Ascending aorta (tissue), 2 donors: ENCODE measurements at regions of chr1 and their contacts with region 1.

Region 1: DNA sequence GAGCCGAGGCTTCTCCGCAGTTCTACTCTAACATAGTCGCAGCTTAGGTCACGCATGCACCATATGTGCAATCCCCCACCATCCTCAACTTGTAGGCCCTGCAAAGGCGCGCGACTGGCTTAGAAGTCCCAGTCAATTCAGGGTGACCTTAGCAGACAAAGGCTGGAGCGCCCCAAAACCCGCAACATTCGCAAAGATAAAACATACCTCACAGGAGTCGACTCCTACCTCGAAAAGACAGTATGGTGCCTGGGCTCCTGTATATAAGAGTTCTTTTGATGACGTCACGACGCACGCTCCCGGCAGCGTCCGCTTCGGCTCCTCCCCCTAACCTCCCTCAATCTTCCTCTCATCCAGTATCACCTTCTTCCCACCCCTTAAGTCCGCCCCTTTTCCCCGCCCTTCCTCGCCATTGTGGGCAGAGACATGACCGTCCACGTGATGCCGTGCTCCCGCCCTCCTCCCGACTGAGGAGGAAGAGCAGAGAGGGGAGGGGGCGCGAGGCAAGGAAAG is at the start of gene GAS5:
- DNase-seq: peak; percentile 99 to 100
- H3K4me3 ChIP-seq: peak within 1 kb of the TSS; percentile 85 to 97
- H3K27ac ChIP-seq: peak within 1 kb of the TSS; percentile 93 to 99
- H3K4me1 ChIP-seq: peaks cover 4 to 10% of the 10 kb centered on the region in 2 donors
- H3K27me3 ChIP-seq: no peaks in the 10 kb centered on the region
- CTCF ChIP-seq: no peak
- total RNA-seq, gene GAS5: 149 TPM

Region 2: DNA sequence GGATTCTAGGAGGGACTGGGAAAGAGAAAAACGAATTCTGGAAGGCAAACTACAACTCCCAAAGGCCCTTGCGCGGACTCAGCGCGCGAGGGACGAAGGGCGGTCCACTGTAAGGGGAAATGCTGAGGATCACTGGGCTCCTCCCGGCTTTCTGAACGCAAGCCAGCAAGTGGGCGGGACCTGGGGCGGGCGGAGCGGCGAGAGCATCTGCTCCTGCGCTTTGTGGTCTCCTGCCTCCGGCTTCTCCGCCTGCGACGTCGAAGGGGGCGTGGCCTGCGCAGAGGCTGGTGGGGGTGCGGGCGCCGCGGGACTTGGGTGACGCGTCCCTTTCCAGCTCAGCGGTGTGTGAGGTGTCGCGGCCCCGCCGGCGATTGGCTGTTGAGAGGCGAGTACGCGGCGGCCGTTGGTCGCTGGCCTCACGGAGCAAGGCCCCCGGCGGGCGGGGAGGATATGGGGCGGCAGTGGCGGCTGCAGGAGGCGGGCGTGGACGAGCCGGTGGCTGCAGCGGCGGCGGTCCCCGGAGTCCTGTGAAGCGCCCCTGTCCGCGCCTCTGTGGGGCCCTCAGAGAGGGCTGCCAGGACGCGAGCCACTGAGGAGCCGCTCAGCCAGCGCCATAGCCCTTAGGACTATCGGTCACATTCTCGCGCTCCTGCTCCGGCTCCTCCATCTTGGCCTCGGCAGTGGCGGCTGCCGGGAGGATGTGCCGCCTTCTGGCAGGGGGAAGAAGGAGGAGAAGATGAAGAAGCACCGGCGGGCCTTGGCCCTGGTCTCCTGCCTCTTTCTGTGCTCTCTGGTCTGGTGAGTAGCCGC is 1334.9 kb before region 1 on chr1 and contains the start of gene SUCO:
- intact Hi-C with region 1: loop called (anchors 5 kb)
- DNase-seq: peak; percentile 100
- H3K4me3 ChIP-seq: peak within 1 kb of the TSS; percentile 80 to 83
- H3K27ac ChIP-seq: peak within 1 kb of the TSS; percentile 95 to 98
- H3K4me1 ChIP-seq: peaks cover 4 to 10% of the 10 kb centered on the region in 2 donors
- H3K27me3 ChIP-seq: no peaks in the 10 kb centered on the region
- CTCF ChIP-seq: peak in 1 of 3 experiments; percentile 5
- total RNA-seq, gene SUCO: 7.8 TPM

Region 3: DNA sequence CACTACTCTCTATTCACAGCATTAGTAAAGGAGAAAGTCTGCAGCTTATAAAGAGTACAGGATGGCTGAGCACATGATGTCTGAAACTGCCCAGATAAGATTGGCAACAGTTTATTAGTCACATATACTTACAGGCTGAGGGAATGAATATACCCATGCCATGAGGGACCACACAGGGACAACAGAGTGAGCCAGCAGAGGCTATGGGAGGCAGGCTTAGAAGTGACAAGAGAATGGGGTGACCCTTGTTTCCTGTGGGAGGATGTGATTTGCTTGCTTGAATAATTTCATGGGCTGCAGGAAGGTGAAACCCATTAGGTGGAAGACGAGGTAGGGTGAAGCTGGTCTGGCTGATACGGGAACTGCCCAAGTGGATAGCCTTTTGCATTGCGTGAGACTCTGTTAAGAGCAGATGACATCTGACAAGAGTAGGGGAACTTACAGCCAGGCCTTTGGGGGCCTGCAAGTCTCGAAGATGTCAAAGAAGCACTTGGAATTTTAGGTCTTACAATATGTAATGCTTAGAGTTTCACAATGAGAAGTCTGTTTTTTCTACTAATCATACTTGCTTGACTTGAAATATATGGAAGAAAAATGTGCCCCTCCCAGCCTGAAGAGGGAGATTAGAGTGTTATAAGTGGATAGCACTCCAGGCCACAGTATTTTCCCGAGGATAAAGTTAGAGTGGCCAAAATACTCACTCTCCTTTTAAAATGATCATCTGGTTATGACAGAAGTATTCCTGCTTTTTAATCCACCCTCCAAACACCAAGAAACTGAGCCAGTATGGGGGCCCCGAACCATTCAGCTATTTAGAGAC is 626.1 kb before region 1 on chr1:
- intact Hi-C with region 1: no loop called
- DNase-seq: no peak
- H3K4me3 ChIP-seq: no peak overlapping the region
- H3K27ac ChIP-seq: no peak overlapping the region
- H3K4me1 ChIP-seq: no peaks in the 10 kb centered on the region
- H3K27me3 ChIP-seq: no peaks in the 10 kb centered on the region
- CTCF ChIP-seq: no peak

Region 4: GRCh38 chr1:173476664-173477285 is 391.0 kb before region 1 on chr1:
- intact Hi-C with region 1: loop called (anchors 1 kb)
- DNase-seq: peak; percentile 64 to 93
- H3K4me3 ChIP-seq: peak overlapping the region; percentile 88 to 95
- H3K27ac ChIP-seq: peak overlapping the region; percentile 99
- H3K4me1 ChIP-seq: peaks cover 12 to 37% of the 10 kb centered on the region in 2 donors
- H3K27me3 ChIP-seq: no peaks in the 10 kb centered on the region
- CTCF ChIP-seq: peak in 1 of 3 experiments; percentile 5

Region 5: DNA sequence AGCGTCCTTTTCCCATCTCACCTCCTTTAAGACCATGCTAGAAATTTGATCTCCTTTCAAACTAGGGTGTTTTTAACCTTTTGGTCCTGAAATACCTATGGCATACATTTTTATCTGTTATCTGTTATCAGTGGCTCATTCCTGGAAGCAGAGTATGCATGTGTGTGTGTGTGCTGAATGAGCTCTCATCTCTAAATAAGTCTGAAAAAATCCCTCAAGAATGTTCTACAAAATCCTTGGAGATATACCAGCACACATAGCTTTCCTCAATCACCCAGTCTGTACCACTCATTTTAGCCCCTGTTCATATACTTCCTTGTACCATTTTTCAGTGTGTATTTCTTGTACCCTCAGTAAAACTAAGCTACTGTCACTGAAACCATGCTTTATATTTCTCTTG is 49.4 kb before region 1 on chr1:
- intact Hi-C with region 1: no loop called
- DNase-seq: no peak
- H3K4me3 ChIP-seq: no peak overlapping the region
- H3K27ac ChIP-seq: no peak overlapping the region
- H3K4me1 ChIP-seq: peaks cover 0 to 1% of the 10 kb centered on the region in 2 donors
- H3K27me3 ChIP-seq: no peaks in the 10 kb centered on the region
- CTCF ChIP-seq: no peak

Region 6: GRCh38 chr1:174022080-174022975 is 154.5 kb after region 1 on chr1 and contains the start of gene RC3H1:
- intact Hi-C with region 1: loop called (anchors 2 kb)
- DNase-seq: peak; percentile 63 to 92
- H3K4me3 ChIP-seq: peak within 1 kb of the TSS; percentile 88 to 100
- H3K27ac ChIP-seq: peak within 1 kb of the TSS; percentile 90 to 94
- H3K4me1 ChIP-seq: peaks cover 19 to 22% of the 10 kb centered on the region in 2 donors
- H3K27me3 ChIP-seq: no peaks in the 10 kb centered on the region
- CTCF ChIP-seq: no peak
- total RNA-seq, gene RC3H1: 5.1 TPM

Region 7: GRCh38 chr1:174999216-174999925 is 1131.6 kb after region 1 on chr1:
- intact Hi-C with region 1: loop called (anchors 1 kb)
- DNase-seq: peak; percentile 96 to 99
- H3K4me3 ChIP-seq: peak overlapping the region; percentile 77 to 100
- H3K27ac ChIP-seq: peak overlapping the region; percentile 95 to 99
- H3K4me1 ChIP-seq: peaks cover 3 to 25% of the 10 kb centered on the region in 2 donors
- H3K27me3 ChIP-seq: no peaks in the 10 kb centered on the region
- CTCF ChIP-seq: no peak

Region 8: GRCh38 chr1:175192630-175193526 is 1325.1 kb after region 1 on chr1 and contains the start of gene KIAA0040:
- intact Hi-C with region 1: loop called (anchors 5 kb)
- DNase-seq: peak; percentile 37 to 91
- H3K4me3 ChIP-seq: peak within 1 kb of the TSS; percentile 58 to 77
- H3K27ac ChIP-seq: peak within 1 kb of the TSS; percentile 76 to 80
- H3K4me1 ChIP-seq: peaks cover 3 to 13% of the 10 kb centered on the region in 2 donors
- H3K27me3 ChIP-seq: no peaks in the 10 kb centered on the region
- CTCF ChIP-seq: peak in 2 of 3 experiments; percentile 17 to 30
- total RNA-seq, gene KIAA0040: 36.7 TPM